GM12878 (cell line): ENCODE measurements at regions of chr14 and their contacts with region 1.

Region 1: DNA sequence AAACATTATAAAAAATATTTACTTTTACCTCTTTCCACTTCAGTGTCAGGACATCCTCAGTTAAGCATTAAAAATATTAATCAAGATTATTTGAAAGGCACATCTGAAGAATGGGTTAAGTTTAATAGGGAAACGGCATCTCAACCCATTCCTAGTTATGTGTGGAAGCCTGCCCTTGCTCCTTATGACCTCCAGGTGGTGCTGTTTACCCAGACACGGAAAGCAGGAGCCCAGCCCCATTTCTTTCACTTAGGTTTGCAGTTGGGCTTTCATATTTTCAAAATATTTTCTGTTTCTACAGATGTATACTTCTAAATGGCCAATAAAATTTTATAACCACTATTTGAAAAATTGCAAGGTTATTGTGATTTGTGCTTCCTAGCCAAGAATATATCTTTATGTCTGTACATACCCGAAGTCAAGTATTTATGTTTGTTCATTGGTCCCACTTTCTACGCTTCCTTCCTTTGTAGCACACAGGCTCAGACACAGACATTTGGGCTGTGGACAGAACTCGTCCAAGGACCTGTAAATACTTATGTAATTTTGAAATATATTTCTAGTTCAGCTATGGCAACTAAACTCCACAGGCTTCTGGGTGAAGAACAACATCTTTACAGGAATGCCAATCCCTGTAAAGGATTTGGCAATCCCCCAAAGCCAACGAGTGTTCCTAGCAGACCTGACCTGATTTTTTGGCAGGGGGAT is 247.1 kb downstream of the AKAP6 start:
- DNase-seq: no peak
- ATAC-seq: peak; percentile 86
- H3K4me3 ChIP-seq: no peak overlapping the region
- H3K27ac ChIP-seq: no peak overlapping the region
- H3K4me1 ChIP-seq: peaks cover 17% of the 10 kb centered on the region
- H3K27me3 ChIP-seq: no peaks in the 10 kb centered on the region
- CTCF ChIP-seq: peak; percentile 92 to 95 (median 92)
- EP300 ChIP-seq: no peak
- POLR2A ChIP-seq: no peak
- RAD21 ChIP-seq: peak; percentile 98

Region 2: GRCh38 chr14:32710731-32711680 is 134.8 kb after region 1 on chr14:
- CTCF ChIA-PET with region 1: no interaction called
- POLR2A ChIA-PET with region 1: no interaction called
- RAD21 ChIA-PET with region 1: interaction called, 3 read pairs
- SMC1A ChIA-PET with region 1: no interaction called
- in situ Hi-C with region 1: no loop called
- intact Hi-C with region 1: loop called (anchors 2 kb)
- DNase-seq: no peak
- ATAC-seq: peak; percentile 77
- H3K4me3 ChIP-seq: no peak overlapping the region
- H3K27ac ChIP-seq: no peak overlapping the region
- H3K4me1 ChIP-seq: peaks cover 7% of the 10 kb centered on the region
- H3K27me3 ChIP-seq: no peaks in the 10 kb centered on the region
- CTCF ChIP-seq: peak; percentile 46 to 61 (median 55); a peak in 5 of 6 replicates
- EP300 ChIP-seq: no peak
- POLR2A ChIP-seq: no peak
- RAD21 ChIP-seq: peak; percentile 83

Region 3: GRCh38 chr14:33432407-33433023 is 856.3 kb after region 1 on chr14:
- CTCF ChIA-PET with region 1: no interaction called
- POLR2A ChIA-PET with region 1: no interaction called
- RAD21 ChIA-PET with region 1: no interaction called
- SMC1A ChIA-PET with region 1: no interaction called
- in situ Hi-C with region 1: loop called (anchors 10 kb)
- intact Hi-C with region 1: loop called (anchors 5 kb)
- DNase-seq: no peak
- ATAC-seq: no peak
- H3K4me3 ChIP-seq: no peak overlapping the region
- H3K27ac ChIP-seq: no peak overlapping the region
- H3K4me1 ChIP-seq: no peaks in the 10 kb centered on the region
- H3K27me3 ChIP-seq: no peaks in the 10 kb centered on the region
- CTCF ChIP-seq: peak; percentile 26 to 46 (median 27); a peak in 4 of 6 replicates
- EP300 ChIP-seq: no peak
- POLR2A ChIP-seq: no peak
- RAD21 ChIP-seq: peak; percentile 54